Ovary (tissue), 10 donors: ENCODE measurements at regions of chr9 and their contacts with region 1.

Region 1: GRCh38 chr9:122464633-122465567 is 12.8 kb downstream of the OR1J1 start:
- DNase-seq: peak; percentile 51 to 72 (median 66)
- H3K4me3 ChIP-seq: peak overlapping the region; percentile 31
- H3K27ac ChIP-seq: no peak overlapping the region
- H3K4me1 ChIP-seq: no peaks in the 10 kb centered on the region
- H3K27me3 ChIP-seq: no peaks in the 10 kb centered on the region
- CTCF ChIP-seq: peak; percentile 40 to 66 (median 50)
- EP300 ChIP-seq: no peak
- POLR2A ChIP-seq: no peak

Region 2: GRCh38 chr9:122125158-122125508 is 339.8 kb before region 1 on chr9:
- intact Hi-C with region 1: loop called in 1 of 4 experiments (anchors 10 kb)
- DNase-seq: peak; percentile 67 to 88 (median 80)
- H3K4me3 ChIP-seq: no peak overlapping the region
- H3K27ac ChIP-seq: no peak overlapping the region
- H3K4me1 ChIP-seq: no peaks in the 10 kb centered on the region
- H3K27me3 ChIP-seq: no peaks in the 10 kb centered on the region
- CTCF ChIP-seq: peak; percentile 73 to 84 (median 82)
- EP300 ChIP-seq: no peak
- POLR2A ChIP-seq: no peak

Region 3: DNA sequence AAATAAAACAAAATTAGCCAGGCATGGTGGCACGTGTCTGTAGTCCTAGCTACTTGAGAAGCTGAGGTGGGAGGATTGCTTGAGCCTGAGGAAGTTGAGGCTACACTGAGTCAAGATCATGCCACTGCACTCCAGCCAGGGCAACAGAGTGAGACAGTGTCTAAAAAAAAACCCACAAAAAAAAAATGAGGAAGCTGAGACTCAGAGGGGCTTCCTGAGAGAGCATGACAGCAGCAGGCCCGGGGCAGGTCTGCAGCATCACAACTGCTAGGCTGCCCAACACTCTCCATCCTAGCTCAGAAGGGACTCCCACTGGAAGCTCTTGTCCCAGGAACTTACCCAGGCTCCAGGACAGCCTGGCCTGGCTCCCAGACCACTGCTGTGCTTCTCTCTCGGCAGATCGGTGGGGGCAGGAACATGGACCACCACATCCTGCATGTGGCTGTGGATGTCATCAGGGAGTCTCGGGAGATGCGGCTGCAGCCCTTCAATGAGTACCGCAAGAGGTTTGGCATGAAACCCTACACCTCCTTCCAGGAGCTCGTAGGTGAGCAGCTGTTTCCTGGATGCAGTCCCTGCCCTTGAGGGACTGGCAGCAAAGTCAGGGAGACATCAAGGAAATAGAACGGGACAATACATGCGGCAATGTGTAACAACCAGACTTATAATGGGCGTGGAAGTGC is 75.0 kb before region 1 on chr9:
- intact Hi-C with region 1: no loop called
- DNase-seq: no peak
- H3K4me3 ChIP-seq: no peak overlapping the region
- H3K27ac ChIP-seq: no peak overlapping the region
- H3K4me1 ChIP-seq: no peaks in the 10 kb centered on the region
- H3K27me3 ChIP-seq: no peaks in the 10 kb centered on the region
- CTCF ChIP-seq: no peak
- EP300 ChIP-seq: no peak
- POLR2A ChIP-seq: no peak

Region 4: GRCh38 chr9:122797316-122798063 is 332.6 kb after region 1 on chr9:
- intact Hi-C with region 1: loop called (anchors 5 to 10 kb)
- DNase-seq: no peak
- H3K4me3 ChIP-seq: no peak overlapping the region
- H3K27ac ChIP-seq: no peak overlapping the region
- H3K4me1 ChIP-seq: no peaks in the 10 kb centered on the region
- H3K27me3 ChIP-seq: no peaks in the 10 kb centered on the region
- CTCF ChIP-seq: no peak
- EP300 ChIP-seq: no peak
- POLR2A ChIP-seq: no peak

Region 5: GRCh38 chr9:122810306-122810946 is 345.5 kb after region 1 on chr9:
- intact Hi-C with region 1: loop called in 3 of 4 experiments (anchors 5 to 10 kb)
- DNase-seq: peak; percentile 44 to 81 (median 74)
- H3K4me3 ChIP-seq: no peak overlapping the region
- H3K27ac ChIP-seq: no peak overlapping the region
- H3K4me1 ChIP-seq: no peaks in the 10 kb centered on the region
- H3K27me3 ChIP-seq: no peaks in the 10 kb centered on the region
- CTCF ChIP-seq: peak in 2 of 3 donors; percentile 72 to 78
- EP300 ChIP-seq: no peak
- POLR2A ChIP-seq: no peak

Region 6: GRCh38 chr9:123349691-123350480 is 885.0 kb after region 1 on chr9:
- intact Hi-C with region 1: loop called in 2 of 4 experiments (anchors 10 kb)
- DNase-seq: peak; percentile 33 to 52 (median 50)
- H3K4me3 ChIP-seq: no peak overlapping the region
- H3K27ac ChIP-seq: no peak overlapping the region
- H3K4me1 ChIP-seq: peaks cover 2% of the 10 kb centered on the region
- H3K27me3 ChIP-seq: no peaks in the 10 kb centered on the region
- CTCF ChIP-seq: peak; percentile 52 to 81 (median 72)
- EP300 ChIP-seq: no peak
- POLR2A ChIP-seq: no peak